ENCODE measurements at regions of chr11 and their contacts with region 1.

Region 1: DNA sequence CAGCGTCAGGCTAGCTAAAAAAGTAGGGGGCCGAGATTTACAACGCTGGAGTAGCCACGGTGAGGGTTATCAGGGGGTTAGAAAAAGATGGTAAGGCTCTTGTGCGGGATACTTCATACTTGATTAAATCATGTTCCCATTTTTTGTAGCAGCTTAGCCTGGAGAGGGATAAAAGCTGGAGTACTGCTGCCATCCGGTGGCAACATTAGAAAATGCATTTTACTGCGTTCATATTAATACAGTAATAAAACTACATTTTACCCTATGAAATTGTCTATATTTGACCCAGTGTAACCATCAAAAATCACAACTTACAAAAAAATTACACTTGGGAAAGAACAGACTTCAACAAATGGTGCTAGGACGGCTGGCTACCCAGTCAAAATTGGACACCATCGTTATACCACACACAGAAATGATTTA is 17.3 kb downstream of the RPUSD4 start:
- DNase-seq: no peak
- ATAC-seq: peak; percentile 79

Region 2: GRCh38 chr11:125925247-125925740 is 268.8 kb before region 1 on chr11:
- intact Hi-C with region 1: loop called (anchors 2 kb)
- DNase-seq: no peak
- ATAC-seq: no peak

Region 3: GRCh38 chr11:126079621-126080124 is 114.5 kb before region 1 on chr11:
- intact Hi-C with region 1: loop called (anchors 10 kb)
- DNase-seq: no peak
- ATAC-seq: peak; percentile 35

Region 4: DNA sequence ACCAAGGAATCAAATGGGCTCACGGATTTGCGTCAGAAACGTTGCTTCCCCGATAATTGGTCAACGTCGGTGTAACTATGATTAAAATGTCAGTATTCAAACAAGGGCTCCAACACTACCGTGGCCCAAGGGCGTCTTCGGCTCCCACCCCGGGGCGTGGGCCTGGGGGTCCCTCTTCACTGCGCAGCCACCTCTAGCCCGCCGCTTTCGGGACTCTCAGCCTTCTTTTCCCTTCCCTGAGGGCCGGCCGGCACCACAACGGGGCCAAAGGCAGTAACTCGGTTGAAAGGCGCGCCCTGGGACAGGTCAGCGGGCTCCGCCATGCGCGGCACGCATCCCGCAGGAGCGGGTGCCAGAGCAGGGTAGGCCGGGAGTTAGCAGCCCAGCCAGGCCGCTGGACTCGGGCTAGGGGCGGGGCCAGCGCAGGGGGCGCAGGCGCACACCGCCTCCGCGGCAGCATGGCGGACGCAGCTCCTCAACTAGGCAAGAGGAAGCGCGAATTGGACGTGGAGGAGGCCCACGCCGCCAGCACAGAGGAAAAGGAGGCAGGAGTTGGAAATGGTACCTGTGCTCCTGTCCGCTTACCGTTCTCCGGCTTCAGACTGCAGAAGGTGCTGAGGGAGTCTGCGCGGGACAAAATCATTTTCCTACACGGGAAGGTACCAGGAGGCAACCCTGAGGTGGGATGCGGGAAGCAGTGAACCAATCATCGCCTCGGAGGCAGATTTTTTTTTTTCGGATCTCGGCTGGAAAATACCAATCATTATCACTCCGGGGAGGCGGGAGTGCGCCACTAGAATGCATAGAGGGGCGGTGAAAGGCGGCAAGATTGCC is 109.7 kb after region 1 on chr11 and contains the start of gene DCPS:
- intact Hi-C with region 1: no loop called
- DNase-seq: peak; percentile 95
- ATAC-seq: peak; percentile 100
- total RNA-seq, gene DCPS: 10.7 TPM

Measured in Right ventricle myocardium superior (tissue), 1 donor.